ENCODE measurements at regions of chr6 and their contacts with region 1.

Region 1: GRCh38 chr6:137717074-137718073 is 149.7 kb upstream of the TNFAIP3 start:
- DNase-seq: no peak
- H3K4me3 ChIP-seq: no peak overlapping the region
- H3K27ac ChIP-seq: no peak overlapping the region
- H3K4me1 ChIP-seq: 0 out of 2 replicates have a peak, but pooled peaks cover 4% of the 10 kb centered on the region
- H3K27me3 ChIP-seq: no peaks in the 10 kb centered on the region

Region 2: GRCh38 chr6:136037876-136038460 is 1679.4 kb before region 1 on chr6:
- in situ Hi-C with region 1: no loop called
- DNase-seq: peak; percentile 78
- H3K4me3 ChIP-seq: peak overlapping the region; percentile 71
- H3K27ac ChIP-seq: peak overlapping the region; percentile 75
- H3K4me1 ChIP-seq: peaks cover 56% of the 10 kb centered on the region
- H3K27me3 ChIP-seq: no peaks in the 10 kb centered on the region

Region 3: GRCh38 chr6:137866914-137867684 is 149.7 kb after region 1 on chr6 and contains the start of gene TNFAIP3:
- in situ Hi-C with region 1: loop called (anchors 5 kb)
- DNase-seq: peak; percentile 98
- H3K4me3 ChIP-seq: peak within 1 kb of the TSS; percentile 85
- H3K27ac ChIP-seq: peak within 1 kb of the TSS; percentile 60
- H3K4me1 ChIP-seq: peaks cover 31% of the 10 kb centered on the region
- H3K27me3 ChIP-seq: no peaks in the 10 kb centered on the region
- total RNA-seq, gene TNFAIP3: 2.1 and 2.7 TPM in 2 replicates

Region 4: DNA sequence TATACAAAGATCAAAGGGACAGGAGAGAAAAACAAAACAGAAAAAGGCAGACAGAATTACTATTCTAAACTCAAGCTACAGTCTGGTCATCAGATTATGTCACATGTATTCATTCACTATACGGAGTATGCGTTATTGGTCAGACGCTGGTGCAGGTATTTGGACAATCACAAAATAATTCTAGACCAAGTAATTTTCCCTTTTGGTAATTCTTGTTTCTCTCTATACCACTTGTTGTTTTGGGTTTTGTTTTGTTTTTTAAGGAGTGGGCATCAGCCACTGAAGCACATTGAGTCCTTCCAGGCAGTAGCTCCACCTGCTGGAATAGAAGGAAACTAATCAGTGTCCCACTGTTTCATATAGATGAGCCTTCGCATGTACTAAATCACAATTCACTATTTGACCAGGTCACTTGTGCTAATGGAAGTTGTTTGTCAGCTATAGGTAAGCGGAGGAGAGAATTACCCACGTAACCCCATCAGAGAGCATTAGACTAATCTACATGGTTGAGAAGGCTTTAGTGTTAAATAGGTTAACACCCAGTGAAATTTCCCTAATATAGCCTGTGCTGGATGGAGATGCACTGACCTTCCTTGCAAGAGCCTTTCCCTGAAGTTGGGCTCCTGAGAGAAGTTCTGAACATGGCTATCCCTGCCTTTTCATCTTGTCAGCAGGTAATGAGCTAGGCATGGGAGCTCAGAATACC is 227.6 kb after region 1 on chr6:
- in situ Hi-C with region 1: loop called (anchors 10 kb)
- DNase-seq: peak; percentile 73
- H3K4me3 ChIP-seq: peak overlapping the region; percentile 57
- H3K27ac ChIP-seq: no peak overlapping the region; the same call in 1 of the 2 replicates
- H3K4me1 ChIP-seq: peaks cover 6% of the 10 kb centered on the region; the same call in 1 of the 2 replicates
- H3K27me3 ChIP-seq: no peaks in the 10 kb centered on the region